ENCODE measurements at regions of chr1 and their contacts with region 1.

Region 1: GRCh38 chr1:116909510-116910378 is at the start of gene PTGFRN:
- ATAC-seq: peak; percentile 71 to 89 (median 82)
- H3K4me3 ChIP-seq: peak within 1 kb of the TSS; percentile 58 to 83 (median 66)
- H3K27ac ChIP-seq: peak within 1 kb of the TSS; percentile 1 to 16
- H3K4me1 ChIP-seq: peaks cover 27 to 41% of the 10 kb centered on the region in 2 donors
- total RNA-seq, gene PTGFRN: 30.3 to 246 (median 88.4) TPM

Region 2: GRCh38 chr1:116202934-116203723 is 706.6 kb before region 1 on chr1:
- in situ Hi-C with region 1: no loop called
- ATAC-seq: peak in 3 of 8 experiments; percentile 38 to 59 (median 55)
- H3K4me3 ChIP-seq: no peak overlapping the region
- H3K27ac ChIP-seq: no peak overlapping the region
- H3K4me1 ChIP-seq: no peaks in the 10 kb centered on the region

Region 3: DNA sequence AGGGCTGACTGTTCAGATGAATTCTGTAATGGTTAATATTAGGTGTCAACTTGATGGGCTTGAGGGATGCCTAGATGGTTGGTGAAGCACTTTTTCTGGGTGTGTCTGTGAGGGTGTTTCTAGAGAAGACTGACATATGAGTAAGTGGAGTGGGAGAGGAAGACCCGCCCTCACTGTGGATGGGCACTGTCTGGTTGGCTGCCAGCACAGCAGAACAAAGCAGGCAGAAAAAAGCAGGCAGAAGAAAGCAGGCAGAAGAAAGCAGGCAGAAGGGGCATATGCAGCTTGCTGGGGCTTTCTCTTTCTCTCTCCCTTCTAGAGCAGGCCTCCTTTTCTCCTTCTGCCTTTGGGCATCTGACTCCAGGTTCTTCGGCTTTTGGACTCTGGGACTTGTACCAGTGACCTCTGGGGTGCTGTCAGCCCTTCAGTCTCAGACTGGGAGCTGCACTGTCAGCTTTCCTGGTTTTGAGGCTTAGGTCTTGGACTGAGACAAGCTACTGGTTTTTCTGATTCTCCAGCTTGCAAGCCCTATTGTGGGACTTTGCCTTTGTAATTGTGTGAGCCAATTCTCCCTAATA is 198.4 kb before region 1 on chr1:
- in situ Hi-C with region 1: no loop called
- ATAC-seq: peak; percentile 42 to 89 (median 76)
- H3K4me3 ChIP-seq: no peak overlapping the region
- H3K27ac ChIP-seq: no peak overlapping the region
- H3K4me1 ChIP-seq: peaks cover 14 to 16% of the 10 kb centered on the region in 2 donors

Region 4: DNA sequence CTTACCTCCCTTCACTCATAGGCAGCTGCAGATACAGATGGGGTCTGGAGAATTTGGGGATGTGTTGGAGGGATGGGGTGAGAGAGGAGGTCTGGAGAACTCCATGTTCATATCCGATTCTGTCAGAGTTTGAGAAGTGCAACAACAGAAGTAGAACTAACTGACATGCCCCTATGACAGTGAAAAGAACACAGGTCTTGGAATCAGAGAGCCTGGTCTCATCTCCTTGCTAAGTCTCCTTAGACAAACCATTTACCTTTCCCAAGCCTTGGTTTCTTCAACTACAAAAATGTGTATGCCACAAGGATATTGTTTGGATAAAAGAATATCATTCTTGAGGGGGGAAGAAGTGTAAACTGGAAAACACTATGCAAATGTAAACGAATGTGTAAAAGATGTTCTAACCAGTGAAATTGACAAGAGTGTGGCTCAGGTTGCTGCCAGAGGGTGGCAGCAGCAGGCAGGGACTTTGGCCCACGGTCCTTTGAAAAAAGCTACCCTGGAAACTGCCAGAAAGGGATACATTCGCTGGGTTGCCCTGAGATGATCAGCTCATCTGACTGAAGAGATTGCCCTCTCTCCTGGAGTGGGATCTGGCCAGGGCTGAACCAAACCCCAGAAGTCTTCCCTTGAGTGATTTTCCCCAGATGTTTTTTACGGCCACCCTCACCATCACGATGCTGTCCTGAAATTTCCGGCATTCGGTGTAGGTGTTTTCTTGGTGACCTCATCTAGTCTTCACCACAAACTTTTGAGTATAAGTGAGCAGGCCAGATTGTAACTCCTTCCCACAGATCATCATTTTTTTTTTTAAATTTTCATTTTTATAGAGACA is 172.5 kb before region 1 on chr1:
- in situ Hi-C with region 1: loop called in 1 of 9 experiments (anchors 25 kb)
- ATAC-seq: peak; percentile 56 to 90 (median 81)
- H3K4me3 ChIP-seq: no peak overlapping the region
- H3K27ac ChIP-seq: no peak overlapping the region
- H3K4me1 ChIP-seq: peaks cover 8 to 9% of the 10 kb centered on the region in 2 donors

Region 5: DNA sequence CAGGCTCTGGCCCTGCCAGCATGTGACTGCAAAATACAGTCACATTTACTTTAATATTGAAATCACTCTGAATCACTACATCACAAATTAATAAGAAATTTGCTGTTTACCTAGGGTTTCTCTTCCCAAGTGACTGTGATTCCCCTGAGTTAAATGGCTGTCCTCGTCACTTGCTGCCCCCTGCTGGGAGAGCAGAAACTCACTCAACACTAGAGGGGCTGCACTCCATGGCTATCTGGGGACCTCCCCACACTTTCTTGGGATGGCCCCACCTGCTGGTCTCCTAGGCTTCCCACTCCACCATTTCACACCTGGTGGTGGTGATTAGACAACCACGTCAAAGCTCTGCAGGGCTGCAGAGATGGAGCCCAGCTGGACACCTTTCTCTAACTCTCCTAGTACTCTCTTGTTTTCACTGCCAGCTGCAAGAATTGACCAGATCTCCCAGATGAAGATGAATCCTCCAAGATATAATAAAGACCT is 92.1 kb before region 1 on chr1:
- in situ Hi-C with region 1: loop called in 1 of 9 experiments (anchors 25 kb)
- ATAC-seq: peak in 3 of 8 experiments; percentile 58 to 94 (median 71)
- H3K4me3 ChIP-seq: no peak overlapping the region
- H3K27ac ChIP-seq: no peak overlapping the region
- H3K4me1 ChIP-seq: no peaks in the 10 kb centered on the region

Measured in motor neuron (in vitro differentiated cells).